Left cardiac atrium (tissue), 4 donors: ENCODE measurements at regions of chr4 and their contacts with region 1.

Region 1: DNA sequence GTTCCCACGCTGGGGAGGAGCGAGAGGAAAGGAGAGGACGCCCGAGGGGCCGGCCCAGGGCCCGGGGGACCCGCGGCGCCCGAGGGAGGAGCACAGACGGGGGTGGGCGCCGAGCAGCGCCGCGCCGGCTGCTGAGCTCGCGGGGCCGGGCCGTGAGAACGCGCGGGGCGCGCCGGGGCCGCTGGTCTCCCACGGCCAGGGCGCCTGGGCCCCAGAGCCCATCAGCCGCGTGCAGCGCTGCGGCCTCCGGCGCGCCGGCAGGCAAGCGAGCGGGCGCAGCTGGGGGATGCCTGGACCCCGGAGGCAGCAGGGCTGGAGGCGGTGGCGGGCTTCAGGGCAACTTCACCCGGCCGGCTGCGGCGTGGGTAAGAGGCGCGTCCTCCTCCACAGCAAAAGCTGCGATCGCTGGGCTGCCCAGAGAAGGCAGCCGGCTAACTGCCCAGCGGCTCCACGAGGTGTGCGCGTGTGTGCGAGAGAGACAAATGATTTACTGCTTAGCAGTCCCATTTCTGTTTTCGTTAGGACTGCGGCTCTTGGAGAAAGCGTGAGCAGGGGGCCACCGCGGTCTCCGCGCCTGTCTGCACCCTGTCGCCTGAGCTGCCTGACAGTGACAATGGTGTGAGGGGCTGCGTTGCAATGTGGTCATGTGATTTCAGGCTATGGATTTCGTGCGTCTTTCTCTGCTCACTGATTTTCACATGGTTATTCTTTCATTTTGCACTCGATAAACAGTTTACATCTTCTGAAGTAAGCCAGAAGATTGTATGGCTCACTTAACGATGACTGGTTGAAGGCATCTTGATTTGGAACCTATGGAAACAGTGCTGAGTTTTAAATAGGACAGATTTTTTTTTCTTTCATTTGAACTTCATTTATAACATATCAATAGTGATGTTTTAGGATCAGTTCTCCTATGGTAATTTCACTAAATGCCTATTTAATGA is 1.2 kb downstream of the GUCY1A1 start:
- DNase-seq: peak; percentile 58
- ATAC-seq: peak; percentile 88 to 89

Region 2: DNA sequence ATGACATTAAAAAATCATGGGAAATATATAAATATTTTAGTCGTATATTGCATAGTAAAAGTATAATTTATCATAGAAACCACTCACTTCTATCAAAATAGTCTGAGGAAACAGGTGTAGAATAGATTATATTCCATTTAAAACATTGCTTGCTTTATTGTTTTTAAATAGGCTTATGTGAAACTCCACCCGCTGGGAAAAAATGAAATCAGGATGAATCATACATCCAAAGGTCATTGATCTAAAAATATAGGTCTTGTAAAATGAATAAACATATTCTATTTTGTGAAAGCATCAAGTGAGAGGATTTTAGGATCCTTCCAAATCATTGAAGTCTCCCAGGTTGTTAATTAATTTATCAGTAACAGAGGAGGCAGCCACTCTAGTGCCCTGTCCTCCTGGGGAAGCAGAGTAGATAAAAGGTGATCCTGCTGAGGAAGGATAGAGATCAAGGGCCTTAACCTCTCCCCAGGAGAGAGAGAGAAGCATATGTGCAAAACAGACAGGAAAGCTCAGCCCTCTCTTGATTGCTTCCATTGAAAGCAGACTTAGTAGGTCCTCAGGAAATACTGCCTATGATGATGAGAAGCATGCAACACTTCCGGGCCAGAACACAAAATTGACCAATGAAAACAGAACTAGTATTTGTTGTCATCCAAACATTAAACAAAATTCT is 194.3 kb before region 1 on chr4:
- intact Hi-C with region 1: no loop called
- DNase-seq: no peak
- ATAC-seq: no peak

Region 3: DNA sequence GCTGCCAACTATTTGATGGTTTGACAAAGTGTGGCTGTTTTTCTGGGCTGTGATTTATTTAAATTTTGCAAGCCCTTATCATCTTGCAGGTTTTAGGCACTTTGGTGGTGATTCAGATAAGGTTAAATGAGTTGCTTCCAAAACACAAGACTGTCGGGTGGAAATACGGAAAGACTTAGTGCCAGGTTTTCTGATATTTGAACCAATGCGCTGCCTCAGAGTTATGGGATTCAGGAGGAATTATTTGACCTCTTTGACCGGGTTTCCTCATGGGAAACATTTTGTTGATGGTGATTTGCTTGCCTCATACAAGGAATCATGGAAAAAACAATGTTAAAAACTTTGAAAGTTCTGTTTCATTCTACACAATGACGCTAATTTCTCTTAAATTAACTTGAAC is 155.0 kb before region 1 on chr4:
- intact Hi-C with region 1: loop called in 1 of 2 experiments (anchors 5 kb)
- DNase-seq: no peak
- ATAC-seq: peak; percentile 61 to 70

Region 4: GRCh38 chr4:155759405-155760252 is 91.8 kb after region 1 on chr4:
- intact Hi-C with region 1: loop called in 1 of 2 experiments (anchors 10 kb)
- DNase-seq: peak; percentile 81
- ATAC-seq: peak; percentile 63 to 80